GM10248 (cell line): ENCODE measurements at regions of chr16 and their contacts with region 1.

Region 1: DNA sequence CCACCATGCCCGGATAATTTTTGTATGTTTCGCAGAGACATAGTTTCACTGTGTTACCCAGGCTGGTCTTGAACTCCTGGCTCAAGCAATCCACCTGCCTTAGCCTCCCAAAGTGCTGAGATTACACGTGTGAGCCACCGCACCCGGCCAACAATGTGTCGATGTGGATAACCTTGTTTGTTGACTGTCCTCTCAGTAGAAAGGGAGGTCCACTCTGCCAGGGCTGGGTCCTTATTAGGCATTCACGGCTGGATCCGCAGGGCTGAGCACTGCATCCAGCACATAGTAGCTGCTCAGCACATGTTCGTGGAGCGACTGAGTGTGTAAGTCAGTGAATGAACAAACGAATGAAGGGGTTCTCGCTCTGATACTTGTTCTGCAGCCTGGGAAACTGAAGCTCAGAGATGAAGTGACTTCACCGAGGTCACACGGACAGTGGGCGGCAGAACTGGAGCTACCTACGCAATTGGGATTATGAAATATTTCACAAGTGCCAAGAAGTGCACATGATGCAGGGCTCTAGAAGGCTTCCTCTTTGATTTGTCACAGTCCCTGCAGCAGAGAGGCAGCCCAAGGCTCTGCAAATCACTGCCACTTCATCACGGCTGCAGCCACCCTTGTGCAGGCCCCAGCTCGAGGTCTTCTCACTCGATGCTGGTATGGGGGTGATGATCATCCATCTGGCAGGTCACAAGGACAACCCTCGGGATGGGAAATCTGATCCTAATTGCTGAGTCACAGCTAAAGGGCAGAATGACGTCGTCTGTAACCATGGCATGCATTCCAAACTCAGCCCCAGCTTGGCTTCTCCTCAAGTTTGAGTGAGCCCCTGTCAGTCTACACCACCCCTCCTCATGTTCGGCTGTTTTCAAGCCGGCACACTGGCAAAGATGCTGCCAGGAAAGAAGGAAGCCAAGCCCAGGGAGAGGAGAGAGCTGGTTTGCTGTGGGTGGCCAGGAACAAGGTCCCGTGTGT is 28.0 kb upstream of the SNN start:
- DNase-seq: no peak
- CTCF ChIP-seq: no peak

Region 2: DNA sequence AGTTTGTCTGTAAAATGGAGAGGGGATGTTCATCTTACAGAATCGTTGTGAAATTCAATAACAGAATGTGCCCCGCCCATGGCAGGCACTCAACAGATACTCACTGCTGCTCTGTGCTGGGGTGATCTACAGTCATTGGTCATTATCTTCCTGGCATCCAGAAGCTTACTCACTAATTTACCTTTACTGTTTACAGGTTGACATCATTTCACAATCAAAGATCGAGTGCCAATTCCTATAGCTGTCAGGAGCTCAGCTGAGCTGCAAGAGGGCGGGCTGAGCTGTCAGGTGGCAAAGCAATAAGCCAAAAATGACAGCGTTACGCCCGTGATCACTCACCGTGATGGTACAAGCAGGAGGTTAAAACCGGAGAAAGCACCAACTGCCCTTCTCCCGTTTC is 104.7 kb before region 1 on chr16:
- CTCF ChIA-PET with region 1: interaction called, 47 read pairs
- POLR2A ChIA-PET with region 1: no interaction called
- DNase-seq: no peak
- CTCF ChIP-seq: no peak

Region 3: GRCh38 chr16:11651796-11652195 is 11.6 kb after region 1 on chr16:
- CTCF ChIA-PET with region 1: interaction called, 19 read pairs
- POLR2A ChIA-PET with region 1: no interaction called
- DNase-seq: no peak
- CTCF ChIP-seq: no peak

Region 4: GRCh38 chr16:11667824-11668622 is 27.8 kb after region 1 on chr16 and contains the start of gene SNN:
- CTCF ChIA-PET with region 1: interaction called, 14 read pairs
- POLR2A ChIA-PET with region 1: no interaction called
- DNase-seq: peak; percentile 97
- CTCF ChIP-seq: no peak